GM12878 (cell line): ENCODE measurements at regions of chr18 and their contacts with region 1.

Region 1: GRCh38 chr18:40935423-40935822 is 1019.6 kb upstream of the PIK3C3 start:
- DNase-seq: peak; percentile 4
- ATAC-seq: peak; percentile 69
- H3K4me3 ChIP-seq: no peak overlapping the region
- H3K27ac ChIP-seq: no peak overlapping the region
- H3K4me1 ChIP-seq: no peaks in the 10 kb centered on the region
- H3K27me3 ChIP-seq: no peaks in the 10 kb centered on the region
- CTCF ChIP-seq: peak; percentile 40 to 52 (median 52); a peak in 5 of 6 replicates
- EP300 ChIP-seq: no peak
- POLR2A ChIP-seq: no peak
- RAD21 ChIP-seq: peak; percentile 52

Region 2: DNA sequence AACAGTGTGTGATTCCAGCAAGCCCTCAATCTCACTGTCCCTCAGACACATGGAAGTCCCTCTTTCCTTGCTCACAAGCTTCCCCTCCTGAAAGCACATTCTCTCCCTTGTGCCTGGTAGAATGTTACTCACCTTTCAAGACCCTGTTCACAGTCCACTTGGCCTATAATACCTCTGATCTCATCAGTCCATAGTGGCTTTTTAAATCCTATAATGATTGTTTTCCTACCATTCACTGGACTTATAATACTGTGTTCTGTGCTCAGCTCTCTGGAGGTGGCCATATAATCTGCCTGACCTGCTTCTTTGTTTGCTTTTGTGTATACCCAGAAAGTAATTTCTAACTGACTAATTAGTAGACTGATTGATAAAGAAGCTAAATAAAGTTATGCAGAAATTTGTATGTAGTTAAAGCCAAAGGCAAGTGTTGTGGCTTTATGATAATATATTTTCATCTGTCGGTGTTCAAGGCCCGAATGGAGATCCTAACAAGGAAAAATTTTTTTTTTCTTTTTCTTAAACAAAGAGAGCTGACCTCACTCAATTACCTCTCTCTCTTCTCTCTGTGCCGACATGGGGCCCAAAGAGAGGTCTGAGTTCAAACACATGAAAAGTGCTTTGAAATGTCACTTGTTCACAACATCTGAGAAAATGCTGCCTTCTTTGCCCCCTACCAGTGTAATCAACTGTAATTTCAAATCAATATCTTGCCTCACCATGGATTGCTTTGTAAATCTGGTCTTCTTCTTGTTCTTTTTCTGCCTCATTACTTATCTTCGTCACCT is 13.4 kb before region 1 on chr18:
- CTCF ChIA-PET with region 1: interaction called, 13 read pairs
- POLR2A ChIA-PET with region 1: no interaction called
- RAD21 ChIA-PET with region 1: no interaction called
- SMC1A ChIA-PET with region 1: interaction called, 5 read pairs
- in situ Hi-C with region 1: no loop called
- intact Hi-C with region 1: no loop called
- DNase-seq: no peak
- ATAC-seq: no peak
- H3K4me3 ChIP-seq: no peak overlapping the region
- H3K27ac ChIP-seq: no peak overlapping the region
- H3K4me1 ChIP-seq: no peaks in the 10 kb centered on the region
- H3K27me3 ChIP-seq: no peaks in the 10 kb centered on the region
- CTCF ChIP-seq: no peak
- EP300 ChIP-seq: no peak
- POLR2A ChIP-seq: no peak
- RAD21 ChIP-seq: no peak

Region 3: GRCh38 chr18:41096504-41096903 is 161.1 kb after region 1 on chr18:
- CTCF ChIA-PET with region 1: interaction called, 18 read pairs
- POLR2A ChIA-PET with region 1: no interaction called
- RAD21 ChIA-PET with region 1: interaction called, 10 read pairs
- SMC1A ChIA-PET with region 1: interaction called, 16 read pairs
- in situ Hi-C with region 1: no loop called
- intact Hi-C with region 1: loop called (anchors 1 kb)
- DNase-seq: no peak
- ATAC-seq: peak; percentile 86
- H3K4me3 ChIP-seq: no peak overlapping the region
- H3K27ac ChIP-seq: no peak overlapping the region
- H3K4me1 ChIP-seq: no peaks in the 10 kb centered on the region
- H3K27me3 ChIP-seq: no peaks in the 10 kb centered on the region
- CTCF ChIP-seq: peak in 1 of 3 experiments; percentile 35; a peak in 1 of 6 replicates
- EP300 ChIP-seq: no peak
- POLR2A ChIP-seq: no peak
- RAD21 ChIP-seq: peak; percentile 15; the same call in 1 of the 2 replicates

Region 4: DNA sequence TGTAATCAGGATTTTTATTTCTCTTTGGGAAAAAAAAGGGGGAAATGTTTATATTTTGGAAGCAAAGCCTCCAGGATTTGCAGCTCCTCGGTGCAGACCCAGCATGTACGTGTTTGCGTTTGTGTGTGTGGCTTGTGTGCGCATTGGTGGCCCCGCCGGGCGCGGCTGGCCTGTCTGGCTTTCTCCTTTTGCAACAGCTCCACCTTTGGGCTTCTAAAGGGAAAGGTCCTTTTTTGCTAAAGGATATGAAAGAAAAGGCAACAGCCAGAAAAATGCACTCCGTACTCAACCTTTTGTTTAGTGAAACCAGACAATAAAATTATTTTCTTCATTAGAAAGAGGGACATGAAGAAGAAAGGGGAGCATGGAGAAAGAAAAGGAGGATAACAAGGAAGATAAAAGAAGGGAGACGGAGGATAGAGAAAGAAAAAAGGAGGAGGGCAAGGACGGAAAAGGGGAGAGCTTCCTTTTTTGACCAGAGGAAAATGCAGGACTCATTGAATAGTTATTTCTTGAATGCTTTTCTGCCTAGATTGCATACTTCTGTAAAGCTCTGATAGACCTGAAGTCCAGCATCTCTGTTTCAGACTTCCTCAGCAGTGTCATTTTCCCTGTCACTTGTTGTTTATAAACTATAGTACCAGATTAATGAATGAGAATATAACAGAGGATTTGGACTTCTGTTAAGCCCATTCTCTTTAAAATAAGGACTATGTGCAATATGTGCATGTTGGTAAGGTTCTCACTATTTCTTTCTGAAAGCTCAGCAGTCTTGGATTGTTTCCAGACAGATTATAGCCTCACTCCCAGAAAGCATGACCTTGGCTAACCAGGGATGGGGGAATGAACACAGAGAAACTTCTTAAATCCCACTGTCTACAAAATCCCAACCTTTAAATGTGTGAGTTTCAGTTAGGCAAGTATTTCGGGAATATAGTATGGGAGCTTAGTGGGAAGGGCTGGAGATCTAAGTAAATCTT is 456.5 kb after region 1 on chr18:
- CTCF ChIA-PET with region 1: interaction called, 10 read pairs
- POLR2A ChIA-PET with region 1: no interaction called
- RAD21 ChIA-PET with region 1: no interaction called
- SMC1A ChIA-PET with region 1: interaction called, 3 read pairs
- in situ Hi-C with region 1: no loop called
- intact Hi-C with region 1: loop called (anchors 10 kb)
- DNase-seq: no peak
- ATAC-seq: peak; percentile 65
- H3K4me3 ChIP-seq: no peak overlapping the region
- H3K27ac ChIP-seq: no peak overlapping the region
- H3K4me1 ChIP-seq: no peaks in the 10 kb centered on the region
- H3K27me3 ChIP-seq: peaks cover 0 to 3% of the 10 kb centered on the region in 2 experiments; a peak in 1 of 4 replicates
- CTCF ChIP-seq: peak; percentile 40 to 59 (median 53); a peak in 5 of 6 replicates
- EP300 ChIP-seq: no peak
- POLR2A ChIP-seq: no peak
- RAD21 ChIP-seq: peak; percentile 61

Region 5: GRCh38 chr18:41745166-41746049 is 810.0 kb after region 1 on chr18:
- CTCF ChIA-PET with region 1: no interaction called
- POLR2A ChIA-PET with region 1: no interaction called
- RAD21 ChIA-PET with region 1: no interaction called
- SMC1A ChIA-PET with region 1: no interaction called
- in situ Hi-C with region 1: loop called (anchors 25 kb)
- intact Hi-C with region 1: no loop called
- DNase-seq: no peak
- ATAC-seq: peak; percentile 91
- H3K4me3 ChIP-seq: no peak overlapping the region
- H3K27ac ChIP-seq: no peak overlapping the region
- H3K4me1 ChIP-seq: no peaks in the 10 kb centered on the region
- H3K27me3 ChIP-seq: no peaks in the 10 kb centered on the region
- CTCF ChIP-seq: peak; percentile 52 to 66 (median 54); a peak in 5 of 6 replicates
- EP300 ChIP-seq: no peak
- POLR2A ChIP-seq: no peak
- RAD21 ChIP-seq: peak; percentile 62

Region 6: DNA sequence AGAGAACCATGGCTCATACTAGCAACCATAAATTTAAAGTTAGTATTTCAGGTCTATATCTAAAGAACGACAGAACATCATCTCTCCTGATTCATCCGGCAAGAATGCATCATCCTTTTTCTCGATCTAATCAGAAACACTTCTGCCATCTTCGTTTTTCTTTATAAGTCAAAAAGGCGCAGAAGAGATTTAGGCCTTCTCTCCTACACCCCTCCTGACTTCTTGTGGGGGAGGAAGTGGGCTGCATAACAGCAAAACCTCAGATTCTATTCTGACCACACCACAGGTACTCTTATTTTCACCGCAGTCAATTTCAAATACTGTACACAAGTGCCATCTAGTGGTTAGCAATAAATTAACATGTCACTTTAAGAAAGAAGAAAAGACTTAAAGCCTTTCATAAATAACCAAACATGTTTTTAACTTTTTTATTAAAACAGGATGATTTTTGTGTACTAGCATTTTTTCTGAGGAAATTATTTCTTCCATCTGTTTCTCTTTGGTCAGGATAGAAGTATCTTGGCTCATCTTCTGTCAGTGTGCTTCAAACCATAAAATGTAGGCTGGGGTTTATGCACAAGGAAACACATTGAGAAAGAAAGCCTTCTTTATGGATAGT is 971.2 kb after region 1 on chr18:
- CTCF ChIA-PET with region 1: interaction called, 5 read pairs
- POLR2A ChIA-PET with region 1: no interaction called
- RAD21 ChIA-PET with region 1: interaction called, 3 read pairs
- SMC1A ChIA-PET with region 1: interaction called, 6 read pairs
- in situ Hi-C with region 1: loop called (anchors 10 kb)
- intact Hi-C with region 1: loop called (anchors 1 kb)
- DNase-seq: peak; percentile 33
- ATAC-seq: peak; percentile 97
- H3K4me3 ChIP-seq: no peak overlapping the region
- H3K27ac ChIP-seq: no peak overlapping the region
- H3K4me1 ChIP-seq: peaks cover 5% of the 10 kb centered on the region; the same call in 1 of the 2 replicates
- H3K27me3 ChIP-seq: no peaks in the 10 kb centered on the region
- CTCF ChIP-seq: peak; percentile 47 to 70 (median 60)
- EP300 ChIP-seq: peak; percentile 39 to 64; a peak in 1 of 4 replicates
- POLR2A ChIP-seq: no peak
- RAD21 ChIP-seq: peak; percentile 83